ENCODE measurements at regions of chr21 and their contacts with region 1.

Region 1: DNA sequence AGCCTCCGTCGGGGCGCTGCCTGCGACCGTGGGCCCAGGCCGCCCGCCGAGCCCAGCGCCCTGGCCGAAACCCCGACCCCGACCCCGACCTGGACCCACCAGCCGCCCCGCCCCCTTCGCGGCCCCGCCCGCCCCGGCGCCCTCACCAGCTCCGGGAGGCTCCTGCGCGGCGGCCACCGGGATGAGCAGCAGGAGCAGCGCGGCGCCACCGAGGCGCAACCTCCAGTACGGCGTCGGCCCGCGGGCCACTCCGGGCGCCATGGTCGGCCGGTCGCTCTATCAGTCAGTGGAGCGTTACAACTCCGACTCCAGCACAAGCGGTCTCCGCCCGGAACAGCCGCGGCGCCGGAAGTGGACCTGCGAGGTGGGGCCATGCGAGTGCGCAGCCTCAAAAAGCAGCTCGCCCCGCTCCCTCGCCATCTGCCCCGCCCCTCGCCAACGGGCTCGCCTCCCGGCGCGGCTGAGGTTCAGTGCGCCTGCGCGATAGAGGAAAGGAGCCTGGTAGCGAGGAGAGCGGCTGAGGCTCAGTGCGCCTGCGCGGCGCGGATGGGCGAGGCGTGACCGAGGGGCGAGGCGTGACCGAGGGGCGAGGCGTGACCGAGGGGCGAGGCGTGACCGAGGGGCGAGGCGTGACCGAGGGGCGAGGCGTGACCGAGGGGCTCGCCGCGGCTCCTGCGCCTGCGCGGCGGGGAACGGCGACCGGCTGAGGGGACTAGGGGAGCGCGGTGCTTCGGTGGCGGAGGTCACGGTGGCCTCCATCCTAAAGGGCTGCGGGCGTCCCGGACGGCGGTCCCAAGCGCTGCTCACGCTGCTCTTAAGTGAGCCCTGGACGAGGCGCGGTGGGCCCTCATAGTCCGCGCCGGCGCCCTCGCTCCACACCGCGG is at the start of gene PTTG1IP:
- DNase-seq: peak; percentile 100
- ATAC-seq: peak; percentile 82
- H3K4me3 Mint-ChIP-seq: peak within 1 kb of the TSS; percentile 92
- H3K27ac Mint-ChIP-seq: peak within 1 kb of the TSS; percentile 85
- H3K4me1 Mint-ChIP-seq: peaks cover 51% of the 10 kb centered on the region
- H3K27me3 Mint-ChIP-seq: no peaks in the 10 kb centered on the region
- total RNA-seq, gene PTTG1IP: 34.8 to 44.3 TPM

Region 2: DNA sequence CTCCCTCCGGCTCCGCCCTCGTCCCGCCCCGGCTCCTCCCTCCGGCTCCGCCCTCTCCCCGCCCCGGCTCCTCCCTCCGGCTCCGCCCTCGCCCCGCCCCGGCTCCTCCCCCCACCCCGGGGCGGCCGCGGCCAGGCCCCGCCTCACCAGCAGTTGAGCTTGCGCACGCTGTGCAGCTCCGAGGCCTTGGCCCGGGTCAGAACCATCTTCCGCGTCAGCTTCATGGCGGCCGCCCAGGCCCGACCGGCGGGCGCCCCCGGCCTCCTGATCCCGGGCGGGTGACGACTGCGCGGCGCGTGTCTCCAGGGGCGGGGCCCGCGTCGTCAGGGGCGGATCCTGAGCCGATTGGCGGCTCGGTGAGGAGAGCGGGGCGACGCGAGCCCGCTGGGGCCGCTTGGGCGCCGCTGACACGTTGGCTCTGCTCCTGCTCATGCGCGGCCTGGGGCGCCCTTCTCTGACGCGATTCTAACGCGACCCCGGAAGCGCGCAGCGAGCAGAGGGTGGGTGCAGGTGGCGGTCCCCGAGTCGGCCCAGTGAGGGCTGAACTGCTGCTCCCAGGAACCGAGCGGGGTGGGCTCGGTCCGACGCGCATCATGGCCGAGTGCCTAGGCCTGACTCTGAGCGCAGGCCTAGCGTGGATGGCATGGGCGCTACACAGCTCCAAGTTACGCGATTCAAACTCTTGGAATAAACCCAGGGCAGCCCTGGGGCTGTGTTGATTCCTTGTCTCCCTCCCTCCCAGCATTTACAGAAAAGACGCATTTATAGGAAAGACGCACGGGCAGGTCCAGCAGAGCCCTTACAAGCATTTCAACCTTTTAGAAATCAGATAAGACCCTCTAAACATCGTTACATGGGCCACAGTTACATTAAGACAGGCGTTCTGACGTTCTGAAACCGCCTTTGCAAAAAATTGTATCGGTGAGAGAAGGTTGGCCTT is 534.4 kb before region 1 on chr21 and contains the start of gene CFAP410:
- CTCF ChIA-PET with region 1: interaction called, 4 read pairs
- POLR2A ChIA-PET with region 1: no interaction called
- intact Hi-C with region 1: loop called in 1 of 2 experiments (anchors 1 kb)
- DNase-seq: peak; percentile 97
- ATAC-seq: peak; percentile 97
- H3K4me3 Mint-ChIP-seq: peak within 1 kb of the TSS; percentile 96
- H3K27ac Mint-ChIP-seq: peak within 1 kb of the TSS; percentile 98
- H3K4me1 Mint-ChIP-seq: peaks cover 18% of the 10 kb centered on the region
- H3K27me3 Mint-ChIP-seq: no peaks in the 10 kb centered on the region
- total RNA-seq, gene CFAP410: 7.3 to 11.4 TPM

Region 3: DNA sequence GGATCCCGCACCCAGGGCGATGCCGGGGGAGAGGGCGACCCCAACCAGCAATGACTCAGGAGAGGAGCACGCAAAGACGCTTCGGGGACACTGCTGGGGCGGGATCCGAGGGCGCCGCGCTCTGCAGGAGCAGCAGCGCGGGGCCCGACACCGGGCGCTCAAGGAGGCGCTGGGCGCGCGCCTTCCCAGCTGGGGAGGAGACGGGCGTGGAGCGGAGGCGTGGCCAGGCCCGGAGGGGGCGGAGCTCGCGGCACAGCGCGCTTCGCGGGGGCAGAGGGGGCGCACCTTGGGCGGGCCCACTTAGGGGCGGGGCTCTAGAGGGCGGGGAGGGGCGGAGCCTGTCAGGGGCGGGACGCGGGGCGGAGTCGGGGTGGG is 56.1 kb before region 1 on chr21:
- CTCF ChIA-PET with region 1: interaction called, 4 read pairs
- POLR2A ChIA-PET with region 1: interaction called, 5 read pairs
- intact Hi-C with region 1: loop called (anchors 1 to 5 kb)
- DNase-seq: peak; percentile 97
- ATAC-seq: peak; percentile 92
- H3K4me3 Mint-ChIP-seq: peak overlapping the region; percentile 69
- H3K27ac Mint-ChIP-seq: no peak overlapping the region
- H3K4me1 Mint-ChIP-seq: peaks cover 13% of the 10 kb centered on the region
- H3K27me3 Mint-ChIP-seq: no peaks in the 10 kb centered on the region

Region 4: GRCh38 chr21:44911389-44912157 is 38.0 kb after region 1 on chr21:
- CTCF ChIA-PET with region 1: interaction called, 5 read pairs
- POLR2A ChIA-PET with region 1: interaction called, 3 read pairs
- intact Hi-C with region 1: loop called in 1 of 2 experiments (anchors 5 kb)
- DNase-seq: peak; percentile 77
- ATAC-seq: peak; percentile 70
- H3K4me3 Mint-ChIP-seq: peak overlapping the region; percentile 64
- H3K27ac Mint-ChIP-seq: peak overlapping the region; percentile 98
- H3K4me1 Mint-ChIP-seq: peaks cover 79% of the 10 kb centered on the region
- H3K27me3 Mint-ChIP-seq: no peaks in the 10 kb centered on the region

Region 5: GRCh38 chr21:44939532-44940115 is 66.0 kb after region 1 on chr21 and contains the start of gene SLX9:
- CTCF ChIA-PET with region 1: no interaction called
- POLR2A ChIA-PET with region 1: no interaction called
- intact Hi-C with region 1: loop called in 1 of 2 experiments (anchors 1 kb)
- DNase-seq: peak; percentile 91
- ATAC-seq: peak; percentile 96
- H3K4me3 Mint-ChIP-seq: peak within 1 kb of the TSS; percentile 88
- H3K27ac Mint-ChIP-seq: peak within 1 kb of the TSS; percentile 86
- H3K4me1 Mint-ChIP-seq: peaks cover 37% of the 10 kb centered on the region
- H3K27me3 Mint-ChIP-seq: no peaks in the 10 kb centered on the region
- total RNA-seq, gene SLX9: 60.8 to 68.8 TPM

Region 6: GRCh38 chr21:45643021-45643980 is 769.7 kb after region 1 on chr21 and contains the start of gene PCBP3:
- CTCF ChIA-PET with region 1: no interaction called
- POLR2A ChIA-PET with region 1: no interaction called
- intact Hi-C with region 1: loop called in 1 of 2 experiments (anchors 5 kb)
- DNase-seq: peak; percentile 99
- ATAC-seq: peak; percentile 84
- H3K4me3 Mint-ChIP-seq: peak within 1 kb of the TSS; percentile 78
- H3K27ac Mint-ChIP-seq: peak within 1 kb of the TSS; percentile 70
- H3K4me1 Mint-ChIP-seq: peaks cover 47% of the 10 kb centered on the region
- H3K27me3 Mint-ChIP-seq: peaks cover 4% of the 10 kb centered on the region
- total RNA-seq, gene PCBP3: 12.2 to 13.2 TPM